A549 (cell line): ENCODE measurements at regions of chr17 and their contacts with region 1.

Region 1: GRCh38 chr17:20226814-20227482 is 217.8 kb downstream of the SPECC1 start:
- DNase-seq: peak; percentile 80 to 85
- ATAC-seq: peak; percentile 95 to 97
- H3K4me3 ChIP-seq: no peak overlapping the region
- H3K27ac ChIP-seq: peak overlapping the region; percentile 62 to 83
- H3K4me1 ChIP-seq: peaks cover 64% of the 10 kb centered on the region
- CTCF ChIP-seq: peak; percentile 92
- EP300 ChIP-seq: no peak
- POLR2A ChIP-seq: no peak
- RAD21 ChIP-seq: peak; percentile 89 to 91

Region 2: GRCh38 chr17:20155258-20156195 is 71.4 kb before region 1 on chr17:
- CTCF ChIA-PET with region 1: interaction called, 24 read pairs
- POLR2A ChIA-PET with region 1: interaction called, 10 read pairs
- DNase-seq: peak; percentile 97
- ATAC-seq: peak; percentile 94 to 98
- H3K4me3 ChIP-seq: peak overlapping the region; percentile 69
- H3K27ac ChIP-seq: peak overlapping the region; percentile 81 to 91
- H3K4me1 ChIP-seq: peaks cover 25% of the 10 kb centered on the region
- CTCF ChIP-seq: no peak
- EP300 ChIP-seq: no peak
- POLR2A ChIP-seq: peak; percentile 45
- RAD21 ChIP-seq: no peak

Region 3: GRCh38 chr17:20197527-20197926 is 29.4 kb before region 1 on chr17:
- CTCF ChIA-PET with region 1: interaction called, 14 read pairs
- POLR2A ChIA-PET with region 1: interaction called, 6 read pairs
- DNase-seq: no peak
- ATAC-seq: no peak
- H3K4me3 ChIP-seq: no peak overlapping the region
- H3K27ac ChIP-seq: no peak overlapping the region
- H3K4me1 ChIP-seq: peaks cover 28% of the 10 kb centered on the region
- CTCF ChIP-seq: no peak
- EP300 ChIP-seq: no peak
- POLR2A ChIP-seq: no peak
- RAD21 ChIP-seq: no peak

Region 4: GRCh38 chr17:20216154-20216815 is 10.7 kb before region 1 on chr17:
- CTCF ChIA-PET with region 1: interaction called, 68 read pairs
- POLR2A ChIA-PET with region 1: no interaction called
- DNase-seq: peak; percentile 48 to 55
- ATAC-seq: peak; percentile 74 to 81
- H3K4me3 ChIP-seq: no peak overlapping the region
- H3K27ac ChIP-seq: peak overlapping the region; percentile 76 to 86
- H3K4me1 ChIP-seq: peaks cover 62% of the 10 kb centered on the region
- CTCF ChIP-seq: no peak
- EP300 ChIP-seq: peak; percentile 32 to 60; a peak in 2 of 5 replicates
- POLR2A ChIP-seq: no peak
- RAD21 ChIP-seq: no peak

Region 5: GRCh38 chr17:20256144-20256543 is 29.2 kb after region 1 on chr17:
- CTCF ChIA-PET with region 1: interaction called, 11 read pairs
- POLR2A ChIA-PET with region 1: no interaction called
- DNase-seq: no peak
- ATAC-seq: no peak
- H3K4me3 ChIP-seq: no peak overlapping the region
- H3K27ac ChIP-seq: no peak overlapping the region
- H3K4me1 ChIP-seq: peaks cover 11% of the 10 kb centered on the region
- CTCF ChIP-seq: no peak
- EP300 ChIP-seq: no peak
- POLR2A ChIP-seq: no peak
- RAD21 ChIP-seq: no peak

Region 6: GRCh38 chr17:20291853-20292252 is 64.9 kb after region 1 on chr17:
- CTCF ChIA-PET with region 1: no interaction called
- POLR2A ChIA-PET with region 1: no interaction called
- DNase-seq: no peak
- ATAC-seq: no peak
- H3K4me3 ChIP-seq: no peak overlapping the region
- H3K27ac ChIP-seq: no peak overlapping the region
- H3K4me1 ChIP-seq: no peaks in the 10 kb centered on the region
- CTCF ChIP-seq: no peak
- EP300 ChIP-seq: no peak
- POLR2A ChIP-seq: no peak
- RAD21 ChIP-seq: no peak